ENCODE measurements at regions of chr1 and their contacts with region 1.

Region 1: GRCh38 chr1:24409535-24409934 is 4.0 kb downstream of the STPG1 start:
- DNase-seq: peak in 1 of 2 experiments; percentile 78
- H3K4me3 ChIP-seq: no peak overlapping the region
- H3K27ac ChIP-seq: peak overlapping the region; percentile 64
- H3K4me1 ChIP-seq: peaks cover 30% of the 10 kb centered on the region
- H3K27me3 ChIP-seq: no peaks in the 10 kb centered on the region
- CTCF ChIP-seq: no peak

Region 2: DNA sequence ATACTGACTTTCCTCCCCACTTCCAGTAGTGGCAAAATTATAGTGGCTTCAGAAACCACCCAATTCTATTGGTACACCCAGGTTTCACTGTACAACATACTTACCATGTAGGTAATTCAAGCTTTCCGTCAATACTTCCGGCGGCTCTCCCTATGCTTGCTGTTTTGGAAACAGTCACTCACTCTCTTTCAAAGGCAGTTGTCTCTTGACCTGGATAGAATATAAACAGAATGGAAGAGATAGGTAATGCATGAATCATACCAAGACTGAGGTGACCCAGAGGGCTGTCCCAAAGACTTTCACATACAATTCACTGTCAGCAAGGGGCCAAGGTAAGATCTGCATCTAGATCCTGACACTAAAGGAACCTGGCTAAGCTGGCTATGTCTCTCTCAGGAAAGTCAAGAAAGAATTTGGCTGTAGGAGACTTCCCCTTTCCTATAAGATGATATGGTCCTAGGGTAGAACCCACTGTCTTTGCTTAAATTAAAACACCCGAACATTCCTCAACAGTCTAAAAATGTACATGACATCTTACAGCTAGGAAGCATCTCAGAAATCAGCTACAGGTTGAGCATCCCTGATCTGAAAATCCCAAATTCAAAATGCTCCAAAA is 1300.5 kb before region 1 on chr1:
- CTCF ChIA-PET with region 1: no interaction called
- POLR2A ChIA-PET with region 1: no interaction called
- intact Hi-C with region 1: no loop called
- DNase-seq: peak in 1 of 2 experiments; percentile 24
- H3K4me3 ChIP-seq: no peak overlapping the region
- H3K27ac ChIP-seq: peak overlapping the region; percentile 27; the same call in 1 of the 2 replicates
- H3K4me1 ChIP-seq: peaks cover 10% of the 10 kb centered on the region
- H3K27me3 ChIP-seq: no peaks in the 10 kb centered on the region
- CTCF ChIP-seq: no peak

Region 3: GRCh38 chr1:24548070-24548469 is 138.5 kb after region 1 on chr1:
- CTCF ChIA-PET with region 1: interaction called, 12 read pairs
- POLR2A ChIA-PET with region 1: no interaction called
- intact Hi-C with region 1: no loop called
- DNase-seq: no peak
- H3K4me3 ChIP-seq: no peak overlapping the region
- H3K27ac ChIP-seq: no peak overlapping the region
- H3K4me1 ChIP-seq: peaks cover 15% of the 10 kb centered on the region
- H3K27me3 ChIP-seq: no peaks in the 10 kb centered on the region
- CTCF ChIP-seq: no peak

Region 4: GRCh38 chr1:24822887-24823286 is 413.4 kb after region 1 on chr1:
- CTCF ChIA-PET with region 1: interaction called, 6 read pairs
- POLR2A ChIA-PET with region 1: no interaction called
- intact Hi-C with region 1: loop called (anchors 5 kb)
- DNase-seq: no peak
- H3K4me3 ChIP-seq: no peak overlapping the region
- H3K27ac ChIP-seq: no peak overlapping the region
- H3K4me1 ChIP-seq: no peaks in the 10 kb centered on the region
- H3K27me3 ChIP-seq: no peaks in the 10 kb centered on the region
- CTCF ChIP-seq: no peak